CD4-positive, alpha-beta memory T cell (primary cell): ENCODE measurements at regions of chr6 and their contacts with region 1.

Region 1: GRCh38 chr6:161418463-161418945 is 144.6 kb upstream of the AGPAT4 start:
- DNase-seq: peak in 4 of 5 donors; percentile 30 to 40 (median 36)
- H3K4me3 ChIP-seq: no peak overlapping the region
- H3K4me3 Mint-ChIP-seq: no peak overlapping the region
- H3K27ac ChIP-seq: no peak overlapping the region
- H3K27ac Mint-ChIP-seq: no peak overlapping the region
- H3K4me1 ChIP-seq: no peaks in the 10 kb centered on the region
- H3K4me1 Mint-ChIP-seq: peaks cover 0 to 4% (median 0%) of the 10 kb centered on the region in 4 donors
- H3K27me3 ChIP-seq: no peaks in the 10 kb centered on the region
- H3K27me3 Mint-ChIP-seq: peaks cover 7 to 10% of the 10 kb centered on the region in 2 donors

Region 2: DNA sequence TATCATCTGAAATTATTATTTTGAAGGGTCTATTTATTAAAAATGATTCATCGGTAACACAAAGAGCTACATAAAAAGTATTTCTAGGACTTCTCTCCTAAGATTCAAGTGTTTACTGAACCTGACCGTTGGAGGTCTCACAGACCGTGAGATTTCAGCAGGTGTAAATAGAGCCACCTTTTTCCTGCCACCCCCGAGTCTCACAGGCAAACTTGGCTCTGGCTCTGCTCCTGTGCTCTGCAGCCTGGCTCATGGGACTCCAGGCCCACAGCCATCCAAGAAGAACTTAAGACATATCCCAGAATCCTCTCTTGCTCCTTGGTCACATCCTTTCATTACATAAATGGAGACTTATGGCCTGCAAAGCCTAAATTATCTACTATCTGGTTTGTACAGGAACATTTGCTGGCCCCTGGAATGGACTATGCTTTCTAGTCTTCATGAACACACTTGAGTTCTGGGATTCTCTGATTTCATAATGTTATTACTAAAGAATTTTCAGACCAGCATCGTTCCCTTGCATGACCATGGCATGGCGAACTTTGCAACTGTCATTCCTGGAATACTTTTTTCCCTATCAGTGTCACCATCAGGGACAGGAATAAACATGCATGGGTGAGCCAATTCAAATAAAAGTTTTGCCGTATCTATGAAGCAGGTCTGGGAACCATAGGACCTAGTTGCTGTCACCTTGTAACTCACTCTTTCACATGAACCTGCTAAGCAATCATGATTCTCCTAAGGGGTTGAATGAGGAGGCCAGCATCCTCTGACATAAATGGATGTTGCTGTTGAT is 76.7 kb before region 1 on chr6:
- CTCF ChIA-PET with region 1: no interaction called
- POLR2A ChIA-PET with region 1: no interaction called
- intact Hi-C with region 1: no loop called
- DNase-seq: no peak
- H3K4me3 ChIP-seq: no peak overlapping the region
- H3K4me3 Mint-ChIP-seq: no peak overlapping the region
- H3K27ac ChIP-seq: no peak overlapping the region
- H3K27ac Mint-ChIP-seq: no peak overlapping the region
- H3K4me1 ChIP-seq: no peaks in the 10 kb centered on the region
- H3K4me1 Mint-ChIP-seq: no peaks in the 10 kb centered on the region
- H3K27me3 ChIP-seq: no peaks in the 10 kb centered on the region
- H3K27me3 Mint-ChIP-seq: peaks cover 0 to 2% of the 10 kb centered on the region in 2 donors

Region 3: DNA sequence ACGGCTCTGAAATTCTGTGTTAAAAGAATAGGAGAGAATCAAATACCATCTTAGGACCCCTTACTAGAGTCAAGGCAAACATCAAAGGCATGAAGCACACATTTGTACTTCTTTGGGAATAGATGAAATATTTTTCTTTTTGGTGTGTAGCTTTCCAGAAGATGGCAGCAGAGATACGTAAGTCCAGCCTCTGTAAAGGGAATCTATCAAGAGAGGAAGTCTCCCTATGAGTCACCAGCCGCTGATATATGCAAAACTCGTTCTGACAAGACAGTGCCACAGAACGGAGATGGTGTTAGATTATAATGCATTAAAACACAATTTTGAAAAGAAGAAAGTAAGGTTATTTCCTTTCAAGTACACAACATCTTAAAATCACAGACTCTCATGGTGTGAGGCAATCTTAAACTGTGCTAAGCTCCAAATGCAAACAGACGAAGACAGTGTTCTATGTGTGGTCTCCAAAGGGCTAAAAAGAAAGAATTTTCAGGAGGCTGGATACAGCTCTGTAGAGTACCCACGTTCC is 24.6 kb before region 1 on chr6:
- CTCF ChIA-PET with region 1: interaction called, 15 read pairs
- POLR2A ChIA-PET with region 1: no interaction called
- intact Hi-C with region 1: no loop called
- DNase-seq: peak; percentile 64 to 84 (median 76)
- H3K4me3 ChIP-seq: no peak overlapping the region
- H3K4me3 Mint-ChIP-seq: no peak overlapping the region
- H3K27ac ChIP-seq: no peak overlapping the region
- H3K27ac Mint-ChIP-seq: no peak overlapping the region
- H3K4me1 ChIP-seq: peaks cover 8% of the 10 kb centered on the region
- H3K4me1 Mint-ChIP-seq: no peaks in the 10 kb centered on the region
- H3K27me3 ChIP-seq: no peaks in the 10 kb centered on the region
- H3K27me3 Mint-ChIP-seq: no peaks in the 10 kb centered on the region

Region 4: DNA sequence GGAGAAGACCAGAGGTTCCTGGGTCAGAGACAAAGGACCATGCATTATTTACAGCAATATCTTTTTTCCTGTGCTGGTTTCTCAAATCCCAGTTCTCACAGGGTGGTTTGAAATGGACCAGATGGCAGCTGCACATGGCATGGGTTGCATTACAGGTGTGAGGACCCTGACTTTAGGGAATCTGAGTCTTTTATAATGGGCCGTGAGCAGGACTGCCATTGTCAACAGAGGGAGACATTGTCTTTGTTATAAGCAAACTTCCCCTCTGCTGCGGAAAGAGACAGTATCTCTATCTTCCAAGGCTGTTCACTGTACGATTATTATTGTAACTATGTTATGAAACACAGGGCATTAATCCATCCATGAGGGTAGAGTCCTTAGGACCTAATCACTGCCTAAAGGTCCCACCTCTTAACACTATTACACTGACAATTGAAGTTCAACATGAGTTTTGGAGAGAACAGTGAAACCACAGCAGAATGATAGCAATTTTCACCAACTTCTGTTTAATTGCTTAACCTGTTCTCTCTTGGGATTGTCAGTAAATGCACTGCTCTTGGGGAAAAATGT is 11.5 kb after region 1 on chr6:
- CTCF ChIA-PET with region 1: interaction called, 30 read pairs
- POLR2A ChIA-PET with region 1: no interaction called
- intact Hi-C with region 1: no loop called
- DNase-seq: no peak
- H3K4me3 ChIP-seq: no peak overlapping the region
- H3K4me3 Mint-ChIP-seq: no peak overlapping the region
- H3K27ac ChIP-seq: no peak overlapping the region
- H3K27ac Mint-ChIP-seq: no peak overlapping the region
- H3K4me1 ChIP-seq: no peaks in the 10 kb centered on the region
- H3K4me1 Mint-ChIP-seq: no peaks in the 10 kb centered on the region
- H3K27me3 ChIP-seq: no peaks in the 10 kb centered on the region
- H3K27me3 Mint-ChIP-seq: peaks cover 0 to 1% of the 10 kb centered on the region in 2 donors

Region 5: DNA sequence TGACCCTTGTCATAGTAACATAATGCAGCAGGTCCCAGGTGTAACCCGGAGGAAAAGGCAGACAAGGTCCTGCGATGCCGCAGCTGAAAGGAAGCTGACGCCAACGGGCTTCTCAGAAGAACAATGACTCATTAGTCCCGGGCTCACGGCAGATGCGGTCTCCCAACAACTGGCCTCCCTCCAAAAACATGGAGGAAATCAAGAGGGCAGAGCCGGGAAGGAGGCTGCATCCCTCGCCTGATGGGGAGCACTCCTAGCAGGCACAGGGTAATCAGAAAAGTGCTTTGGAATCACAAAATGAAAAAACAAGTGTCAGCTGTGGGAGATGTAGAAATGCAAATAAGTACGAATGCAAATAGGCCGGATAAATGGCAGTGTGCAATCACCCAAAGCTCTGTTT is 20.6 kb after region 1 on chr6:
- CTCF ChIA-PET with region 1: interaction called, 15 read pairs
- POLR2A ChIA-PET with region 1: no interaction called
- intact Hi-C with region 1: no loop called
- DNase-seq: no peak
- H3K4me3 ChIP-seq: no peak overlapping the region
- H3K4me3 Mint-ChIP-seq: no peak overlapping the region
- H3K27ac ChIP-seq: no peak overlapping the region
- H3K27ac Mint-ChIP-seq: no peak overlapping the region
- H3K4me1 ChIP-seq: no peaks in the 10 kb centered on the region
- H3K4me1 Mint-ChIP-seq: no peaks in the 10 kb centered on the region
- H3K27me3 ChIP-seq: no peaks in the 10 kb centered on the region
- H3K27me3 Mint-ChIP-seq: peaks cover 0 to 2% of the 10 kb centered on the region in 2 donors